ENCODE measurements at regions of chr1 and their contacts with region 1.

Region 1: GRCh38 chr1:205485338-205486228 is 18.9 kb upstream of the CDK18 start:
- DNase-seq: peak; percentile 79
- ATAC-seq: peak; percentile 76
- H3K4me3 Mint-ChIP-seq: no peak overlapping the region
- H3K27ac Mint-ChIP-seq: no peak overlapping the region
- H3K4me1 Mint-ChIP-seq: peaks cover 27% of the 10 kb centered on the region
- H3K27me3 Mint-ChIP-seq: peaks cover 42% of the 10 kb centered on the region
- CTCF ChIP-seq: peak; percentile 95

Region 2: DNA sequence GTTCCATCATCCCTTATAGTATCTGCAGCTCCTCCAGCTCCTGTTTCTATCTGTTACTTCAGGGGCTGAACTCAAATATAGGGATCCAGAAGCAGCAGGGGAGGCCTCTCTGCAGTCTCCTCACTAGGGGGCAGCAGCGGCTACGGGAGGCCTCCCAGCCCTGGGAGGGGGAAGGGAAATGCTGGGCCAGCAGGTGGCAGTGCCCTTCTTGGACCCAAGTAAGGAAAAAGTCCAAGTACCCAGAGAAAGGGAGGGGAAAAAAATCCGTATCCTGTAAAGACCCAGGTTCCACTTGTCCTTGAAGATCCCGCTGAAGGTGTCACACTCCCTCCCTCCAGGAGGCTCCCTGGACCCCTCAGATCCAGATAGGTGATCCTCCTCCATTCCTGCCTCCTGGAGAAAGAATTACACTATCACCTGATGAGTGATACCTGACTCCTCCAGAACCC is 149.9 kb before region 1 on chr1:
- CTCF ChIA-PET with region 1: interaction called, 67 read pairs
- POLR2A ChIA-PET with region 1: no interaction called
- intact Hi-C with region 1: no loop called
- DNase-seq: peak; percentile 84
- ATAC-seq: peak; percentile 92
- H3K4me3 Mint-ChIP-seq: no peak overlapping the region
- H3K27ac Mint-ChIP-seq: no peak overlapping the region
- H3K4me1 Mint-ChIP-seq: peaks cover 6% of the 10 kb centered on the region
- H3K27me3 Mint-ChIP-seq: peaks cover 6% of the 10 kb centered on the region
- CTCF ChIP-seq: peak; percentile 98

Region 3: DNA sequence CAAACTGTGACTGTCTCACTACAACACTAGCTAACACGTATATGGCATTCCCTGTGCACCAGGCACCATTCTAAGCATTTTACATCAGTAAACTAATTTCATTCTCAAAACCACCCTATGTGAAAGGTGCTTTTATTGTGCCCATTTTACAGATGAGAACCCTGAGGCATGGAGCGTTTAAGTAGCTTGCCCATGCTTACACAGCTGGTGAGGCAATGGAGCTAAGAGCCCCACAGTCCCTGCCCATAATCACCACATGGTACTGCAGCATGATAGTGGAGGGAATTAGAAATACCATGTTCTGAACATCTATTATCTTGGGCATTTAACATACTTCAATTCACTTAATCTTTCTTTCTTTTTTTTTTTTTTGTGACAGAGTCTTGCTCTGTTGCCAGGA is 97.7 kb before region 1 on chr1:
- CTCF ChIA-PET with region 1: interaction called, 28 read pairs
- POLR2A ChIA-PET with region 1: no interaction called
- intact Hi-C with region 1: no loop called
- DNase-seq: no peak
- ATAC-seq: no peak
- H3K4me3 Mint-ChIP-seq: no peak overlapping the region
- H3K27ac Mint-ChIP-seq: no peak overlapping the region
- H3K4me1 Mint-ChIP-seq: no peaks in the 10 kb centered on the region
- H3K27me3 Mint-ChIP-seq: peaks cover 1% of the 10 kb centered on the region
- CTCF ChIP-seq: no peak

Region 4: DNA sequence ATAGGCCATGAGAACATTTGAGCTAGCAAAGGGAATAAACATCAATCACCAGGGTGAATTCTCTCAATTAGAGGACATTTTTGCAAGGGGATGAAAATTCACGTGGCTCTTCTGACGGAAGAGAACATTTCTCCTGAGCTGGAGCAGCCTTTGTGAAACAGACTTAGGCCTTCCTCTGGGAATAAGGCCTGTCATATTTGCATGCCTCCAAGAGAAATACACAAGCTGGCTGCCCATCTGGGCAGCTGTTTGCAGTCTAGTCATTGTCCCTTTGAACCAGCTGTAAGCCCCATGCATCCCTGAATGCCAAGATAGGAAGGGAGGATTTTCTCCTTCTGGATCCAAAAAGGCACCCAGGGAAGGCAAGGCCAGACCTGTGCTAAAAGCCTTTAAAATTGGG is 69.3 kb before region 1 on chr1:
- CTCF ChIA-PET with region 1: interaction called, 12 read pairs
- POLR2A ChIA-PET with region 1: no interaction called
- intact Hi-C with region 1: no loop called
- DNase-seq: no peak
- ATAC-seq: no peak
- H3K4me3 Mint-ChIP-seq: no peak overlapping the region
- H3K27ac Mint-ChIP-seq: no peak overlapping the region
- H3K4me1 Mint-ChIP-seq: no peaks in the 10 kb centered on the region
- H3K27me3 Mint-ChIP-seq: peaks cover 11% of the 10 kb centered on the region
- CTCF ChIP-seq: no peak

Region 5: GRCh38 chr1:205458777-205459566 is 26.6 kb before region 1 on chr1:
- CTCF ChIA-PET with region 1: interaction called, 25 read pairs
- POLR2A ChIA-PET with region 1: no interaction called
- intact Hi-C with region 1: no loop called
- DNase-seq: peak; percentile 63
- ATAC-seq: peak; percentile 70
- H3K4me3 Mint-ChIP-seq: no peak overlapping the region
- H3K27ac Mint-ChIP-seq: no peak overlapping the region
- H3K4me1 Mint-ChIP-seq: peaks cover 10% of the 10 kb centered on the region
- H3K27me3 Mint-ChIP-seq: peaks cover 43% of the 10 kb centered on the region
- CTCF ChIP-seq: no peak

Region 6: DNA sequence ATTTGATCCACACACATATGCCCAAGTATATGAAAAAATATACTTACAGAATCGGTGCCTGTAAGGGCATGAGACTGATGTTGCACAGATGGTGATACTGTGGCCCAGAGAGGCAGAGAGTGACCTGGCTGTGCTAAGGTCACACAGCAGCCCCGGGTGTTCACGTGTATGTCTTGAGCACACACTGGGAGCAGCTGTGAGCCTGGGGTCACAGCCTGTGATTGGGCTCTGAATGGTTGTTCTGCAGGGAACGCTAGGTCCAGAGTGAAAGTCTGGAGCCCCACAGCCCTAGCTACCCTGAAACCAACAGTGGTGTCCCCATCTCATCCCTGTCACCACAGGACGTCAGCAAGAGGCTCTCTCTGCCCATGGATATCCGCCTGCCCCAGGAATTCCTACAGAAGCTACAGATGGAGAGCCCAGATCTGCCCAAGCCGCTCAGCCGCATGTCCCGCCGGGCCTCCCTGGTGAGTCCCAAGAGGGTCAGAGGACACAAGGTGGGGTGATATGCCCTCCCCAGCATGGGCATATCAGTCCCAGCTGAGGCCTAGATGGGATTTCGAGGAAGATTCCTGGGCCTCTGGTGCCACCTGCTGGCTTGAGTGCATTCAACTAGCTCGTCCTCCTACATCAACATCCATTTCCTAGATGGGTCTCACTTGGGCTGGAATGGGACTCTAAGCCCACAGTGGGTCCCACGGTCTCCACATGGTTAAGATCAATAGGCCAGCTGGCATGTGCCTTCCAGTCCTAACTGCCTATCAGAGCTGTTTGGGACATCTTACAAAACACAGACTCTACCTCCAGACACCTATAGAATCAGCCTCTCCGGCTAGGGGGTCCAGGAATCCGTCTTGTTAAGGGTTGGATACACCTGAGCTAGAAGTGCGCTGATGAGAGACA is 38.6 kb after region 1 on chr1:
- CTCF ChIA-PET with region 1: interaction called, 292 read pairs
- POLR2A ChIA-PET with region 1: interaction called, 4 read pairs
- intact Hi-C with region 1: loop called (anchors 1 kb)
- DNase-seq: peak; percentile 85
- ATAC-seq: peak; percentile 62
- H3K4me3 Mint-ChIP-seq: no peak overlapping the region
- H3K27ac Mint-ChIP-seq: no peak overlapping the region
- H3K4me1 Mint-ChIP-seq: no peaks in the 10 kb centered on the region
- H3K27me3 Mint-ChIP-seq: no peaks in the 10 kb centered on the region
- CTCF ChIP-seq: peak; percentile 81

Region 7: GRCh38 chr1:205729945-205730610 is 244.5 kb after region 1 on chr1:
- CTCF ChIA-PET with region 1: no interaction called
- POLR2A ChIA-PET with region 1: no interaction called
- intact Hi-C with region 1: no loop called
- DNase-seq: no peak
- ATAC-seq: no peak
- H3K4me3 Mint-ChIP-seq: no peak overlapping the region
- H3K27ac Mint-ChIP-seq: no peak overlapping the region
- H3K4me1 Mint-ChIP-seq: peaks cover 42% of the 10 kb centered on the region
- H3K27me3 Mint-ChIP-seq: no peaks in the 10 kb centered on the region
- CTCF ChIP-seq: no peak